ENCODE measurements at regions of chr6 and their contacts with region 1.

Region 1: GRCh38 chr6:43667245-43668150 is 20.1 kb downstream of the MRPS18A start:
- DNase-seq: no peak
- ATAC-seq: peak; percentile 84
- H3K4me3 ChIP-seq: no peak overlapping the region
- H3K27ac ChIP-seq: peak overlapping the region; percentile 69
- H3K4me1 ChIP-seq: peaks cover 38% of the 10 kb centered on the region
- H3K27me3 ChIP-seq: no peaks in the 10 kb centered on the region
- CTCF ChIP-seq: peak; percentile 95 to 99 (median 95)
- EP300 ChIP-seq: no peak
- POLR2A ChIP-seq: peak; percentile 70
- RAD21 ChIP-seq: peak; percentile 92

Region 2: GRCh38 chr6:43299338-43300293 is 367.9 kb before region 1 on chr6:
- CTCF ChIA-PET with region 1: no interaction called
- POLR2A ChIA-PET with region 1: no interaction called
- RAD21 ChIA-PET with region 1: no interaction called
- SMC1A ChIA-PET with region 1: no interaction called
- in situ Hi-C with region 1: no loop called
- intact Hi-C with region 1: no loop called
- DNase-seq: no peak
- ATAC-seq: peak; percentile 47; the same call in 2 of the 3 replicates
- H3K4me3 ChIP-seq: no peak overlapping the region
- H3K27ac ChIP-seq: no peak overlapping the region
- H3K4me1 ChIP-seq: no peaks in the 10 kb centered on the region
- H3K27me3 ChIP-seq: no peaks in the 10 kb centered on the region
- CTCF ChIP-seq: no peak
- EP300 ChIP-seq: no peak
- POLR2A ChIP-seq: no peak
- RAD21 ChIP-seq: no peak

Region 3: GRCh38 chr6:43608310-43608763 is 59.2 kb before region 1 on chr6:
- CTCF ChIA-PET with region 1: interaction called, 17 read pairs
- POLR2A ChIA-PET with region 1: no interaction called
- RAD21 ChIA-PET with region 1: interaction called, 3 read pairs
- SMC1A ChIA-PET with region 1: interaction called, 3 read pairs
- in situ Hi-C with region 1: no loop called
- intact Hi-C with region 1: no loop called
- DNase-seq: peak; percentile 17
- ATAC-seq: peak; percentile 74
- H3K4me3 ChIP-seq: no peak overlapping the region
- H3K27ac ChIP-seq: no peak overlapping the region
- H3K4me1 ChIP-seq: no peaks in the 10 kb centered on the region
- H3K27me3 ChIP-seq: no peaks in the 10 kb centered on the region
- CTCF ChIP-seq: peak; percentile 74 to 84 (median 78)
- EP300 ChIP-seq: no peak
- POLR2A ChIP-seq: no peak
- RAD21 ChIP-seq: peak; percentile 61

Region 4: GRCh38 chr6:43679057-43679456 is 11.6 kb after region 1 on chr6:
- CTCF ChIA-PET with region 1: interaction called, 18 read pairs
- POLR2A ChIA-PET with region 1: no interaction called
- RAD21 ChIA-PET with region 1: no interaction called
- SMC1A ChIA-PET with region 1: interaction called, 3 read pairs
- in situ Hi-C with region 1: no loop called
- intact Hi-C with region 1: no loop called
- DNase-seq: no peak
- ATAC-seq: no peak
- H3K4me3 ChIP-seq: no peak overlapping the region
- H3K27ac ChIP-seq: no peak overlapping the region
- H3K4me1 ChIP-seq: peaks cover 4% of the 10 kb centered on the region; the same call in 1 of the 2 replicates
- H3K27me3 ChIP-seq: no peaks in the 10 kb centered on the region
- CTCF ChIP-seq: no peak
- EP300 ChIP-seq: no peak
- POLR2A ChIP-seq: no peak
- RAD21 ChIP-seq: no peak

Region 5: GRCh38 chr6:43723737-43724295 is 56.3 kb after region 1 on chr6:
- CTCF ChIA-PET with region 1: interaction called, 37 read pairs
- POLR2A ChIA-PET with region 1: no interaction called
- RAD21 ChIA-PET with region 1: interaction called, 14 read pairs
- SMC1A ChIA-PET with region 1: interaction called, 9 read pairs
- in situ Hi-C with region 1: no loop called
- intact Hi-C with region 1: loop called (anchors 1 kb)
- DNase-seq: no peak
- ATAC-seq: peak; percentile 88
- H3K4me3 ChIP-seq: no peak overlapping the region
- H3K27ac ChIP-seq: no peak overlapping the region
- H3K4me1 ChIP-seq: peaks cover 24% of the 10 kb centered on the region
- H3K27me3 ChIP-seq: no peaks in the 10 kb centered on the region
- CTCF ChIP-seq: peak; percentile 76 to 93 (median 81)
- EP300 ChIP-seq: no peak
- POLR2A ChIP-seq: no peak
- RAD21 ChIP-seq: peak; percentile 82

Region 6: DNA sequence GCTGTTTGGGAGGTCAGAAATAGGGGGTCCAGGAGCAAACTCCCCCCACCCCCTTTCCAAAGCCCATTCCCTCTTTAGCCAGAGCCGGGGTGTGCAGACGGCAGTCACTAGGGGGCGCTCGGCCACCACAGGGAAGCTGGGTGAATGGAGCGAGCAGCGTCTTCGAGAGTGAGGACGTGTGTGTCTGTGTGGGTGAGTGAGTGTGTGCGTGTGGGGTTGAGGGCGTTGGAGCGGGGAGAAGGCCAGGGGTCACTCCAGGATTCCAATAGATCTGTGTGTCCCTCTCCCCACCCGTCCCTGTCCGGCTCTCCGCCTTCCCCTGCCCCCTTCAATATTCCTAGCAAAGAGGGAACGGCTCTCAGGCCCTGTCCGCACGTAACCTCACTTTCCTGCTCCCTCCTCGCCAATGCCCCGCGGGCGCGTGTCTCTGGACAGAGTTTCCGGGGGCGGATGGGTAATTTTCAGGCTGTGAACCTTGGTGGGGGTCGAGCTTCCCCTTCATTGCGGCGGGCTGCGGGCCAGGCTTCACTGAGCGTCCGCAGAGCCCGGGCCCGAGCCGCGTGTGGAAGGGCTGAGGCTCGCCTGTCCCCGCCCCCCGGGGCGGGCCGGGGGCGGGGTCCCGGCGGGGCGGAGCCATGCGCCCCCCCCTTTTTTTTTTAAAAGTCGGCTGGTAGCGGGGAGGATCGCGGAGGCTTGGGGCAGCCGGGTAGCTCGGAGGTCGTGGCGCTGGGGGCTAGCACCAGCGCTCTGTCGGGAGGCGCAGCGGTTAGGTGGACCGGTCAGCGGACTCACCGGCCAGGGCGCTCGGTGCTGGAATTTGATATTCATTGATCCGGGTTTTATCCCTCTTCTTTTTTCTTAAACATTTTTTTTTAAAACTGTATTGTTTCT is 102.3 kb after region 1 on chr6 and contains the start of gene VEGFA:
- CTCF ChIA-PET with region 1: interaction called, 50 read pairs
- POLR2A ChIA-PET with region 1: no interaction called
- RAD21 ChIA-PET with region 1: interaction called, 18 read pairs
- SMC1A ChIA-PET with region 1: interaction called, 12 read pairs
- in situ Hi-C with region 1: no loop called
- intact Hi-C with region 1: loop called (anchors 1 kb)
- DNase-seq: peak; percentile 64
- ATAC-seq: peak; percentile 68
- H3K4me3 ChIP-seq: peak within 1 kb of the TSS; percentile 98
- H3K27ac ChIP-seq: peak within 1 kb of the TSS; percentile 88
- H3K4me1 ChIP-seq: peaks cover 14% of the 10 kb centered on the region
- H3K27me3 ChIP-seq: no peaks in the 10 kb centered on the region
- CTCF ChIP-seq: peak; percentile 97 to 99 (median 98)
- EP300 ChIP-seq: no peak
- POLR2A ChIP-seq: peak; percentile 90
- RAD21 ChIP-seq: peak; percentile 98
- polyA plus RNA-seq, gene VEGFA: 2.9 to 4.3 TPM

Measured in GM12878 (cell line).